ENCODE measurements at regions of chr9 and their contacts with region 1.

Region 1: GRCh38 chr9:34252670-34253459 is 74.0 kb downstream of the UBAP1 start:
- DNase-seq: peak; percentile 31 to 89
- H3K4me3 ChIP-seq: no peak overlapping the region
- H3K27ac ChIP-seq: no peak overlapping the region
- H3K4me1 ChIP-seq: no peaks in the 10 kb centered on the region
- H3K27me3 ChIP-seq: no peaks in the 10 kb centered on the region
- CTCF ChIP-seq: peak; percentile 80 to 95 (median 93)
- EP300 ChIP-seq: no peak
- POLR2A ChIP-seq: no peak; a peak in 1 of 3 replicates
- RAD21 ChIP-seq: peak; percentile 68 to 75

Region 2: DNA sequence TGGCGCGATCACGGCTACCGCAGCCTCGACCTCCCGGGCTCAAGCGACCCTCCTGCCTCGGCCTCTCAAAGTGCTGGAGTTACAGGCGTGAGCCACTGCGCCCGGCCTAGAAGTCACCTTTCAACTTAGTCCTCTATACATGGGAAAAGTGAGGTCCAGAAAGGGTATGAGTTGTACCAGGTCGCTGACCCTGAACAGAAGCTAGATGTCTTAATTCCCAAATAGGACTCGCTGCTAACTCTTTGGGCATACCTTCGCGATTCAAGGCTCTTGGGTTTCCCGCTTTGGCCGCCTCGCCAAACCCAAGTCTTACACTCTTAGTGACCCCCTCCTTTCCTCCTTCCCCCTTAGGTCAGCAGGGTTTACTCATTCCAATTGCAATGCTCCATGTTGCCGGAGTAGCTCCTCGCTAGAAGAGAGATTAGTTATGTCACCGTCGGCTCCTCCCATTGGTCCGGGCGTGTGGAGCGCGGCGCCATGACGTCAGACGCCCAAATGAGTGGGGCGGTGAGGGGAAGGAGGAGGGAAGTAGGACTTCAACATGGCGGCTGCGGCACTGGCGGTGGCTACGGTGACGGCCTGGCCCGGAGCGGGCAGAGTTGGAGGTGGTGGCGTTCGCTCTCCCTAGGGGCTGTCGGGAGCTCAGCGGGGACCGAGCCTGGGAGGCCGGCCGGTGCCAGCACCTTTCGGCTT is 74.2 kb before region 1 on chr9 and contains the start of gene UBAP1:
- CTCF ChIA-PET with region 1: interaction called, 16 read pairs
- POLR2A ChIA-PET with region 1: interaction called, 5 read pairs
- DNase-seq: peak; percentile 90 to 95
- H3K4me3 ChIP-seq: peak within 1 kb of the TSS; percentile 81 to 99 (median 90)
- H3K27ac ChIP-seq: peak within 1 kb of the TSS; percentile 96
- H3K4me1 ChIP-seq: no peaks in the 10 kb centered on the region; a peak in 1 of 7 replicates
- H3K27me3 ChIP-seq: no peaks in the 10 kb centered on the region
- CTCF ChIP-seq: no peak
- EP300 ChIP-seq: no peak
- POLR2A ChIP-seq: peak in 1 of 2 experiments; percentile 90; a peak in 2 of 3 replicates
- RAD21 ChIP-seq: no peak
- total RNA-seq, gene UBAP1: 31.3 and 32.4 TPM in 2 replicates

Region 3: DNA sequence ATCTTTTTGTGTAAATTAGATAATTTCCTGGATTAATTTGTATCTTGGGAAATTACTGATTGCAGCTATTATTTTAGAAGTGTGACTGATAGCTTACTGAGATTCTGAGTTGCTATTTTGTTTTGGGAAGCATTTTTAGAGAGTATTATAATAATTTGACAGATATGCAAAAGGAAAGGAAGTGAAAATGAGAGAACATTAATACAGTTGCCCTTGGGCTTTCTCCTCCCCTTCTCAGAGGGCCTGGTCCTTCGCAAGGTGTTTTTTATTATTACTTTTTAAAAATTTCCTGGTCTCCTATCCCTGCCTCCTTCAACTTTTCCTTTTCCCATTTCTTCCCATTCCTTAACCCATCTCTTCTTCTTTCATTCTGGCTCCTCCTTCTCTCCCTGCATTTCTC is 41.5 kb before region 1 on chr9:
- CTCF ChIA-PET with region 1: no interaction called
- POLR2A ChIA-PET with region 1: no interaction called
- DNase-seq: no peak
- H3K4me3 ChIP-seq: no peak overlapping the region
- H3K27ac ChIP-seq: no peak overlapping the region
- H3K4me1 ChIP-seq: no peaks in the 10 kb centered on the region
- H3K27me3 ChIP-seq: no peaks in the 10 kb centered on the region
- CTCF ChIP-seq: no peak
- EP300 ChIP-seq: no peak
- POLR2A ChIP-seq: no peak
- RAD21 ChIP-seq: no peak

Region 4: GRCh38 chr9:34242830-34243229 is 10.0 kb before region 1 on chr9:
- CTCF ChIA-PET with region 1: interaction called, 52 read pairs
- POLR2A ChIA-PET with region 1: interaction called, 3 read pairs
- DNase-seq: no peak
- H3K4me3 ChIP-seq: no peak overlapping the region
- H3K27ac ChIP-seq: no peak overlapping the region
- H3K4me1 ChIP-seq: peaks cover 0 to 2% (median 0%) of the 10 kb centered on the region in 4 experiments; a peak in 1 of 7 replicates
- H3K27me3 ChIP-seq: no peaks in the 10 kb centered on the region
- CTCF ChIP-seq: no peak
- EP300 ChIP-seq: no peak
- POLR2A ChIP-seq: no peak
- RAD21 ChIP-seq: no peak

Region 5: GRCh38 chr9:34291023-34291422 is 38.2 kb after region 1 on chr9:
- CTCF ChIA-PET with region 1: interaction called, 11 read pairs
- POLR2A ChIA-PET with region 1: no interaction called
- DNase-seq: no peak
- H3K4me3 ChIP-seq: no peak overlapping the region
- H3K27ac ChIP-seq: no peak overlapping the region
- H3K4me1 ChIP-seq: no peaks in the 10 kb centered on the region
- H3K27me3 ChIP-seq: no peaks in the 10 kb centered on the region
- CTCF ChIP-seq: no peak
- EP300 ChIP-seq: no peak
- POLR2A ChIP-seq: no peak
- RAD21 ChIP-seq: no peak

Region 6: GRCh38 chr9:34337404-34337803 is 84.5 kb after region 1 on chr9:
- CTCF ChIA-PET with region 1: interaction called, 18 read pairs
- POLR2A ChIA-PET with region 1: no interaction called
- DNase-seq: no peak
- H3K4me3 ChIP-seq: no peak overlapping the region
- H3K27ac ChIP-seq: no peak overlapping the region
- H3K4me1 ChIP-seq: peaks cover 2 to 9% (median 8%) of the 10 kb centered on the region in 4 experiments; a peak in 5 of 7 replicates
- H3K27me3 ChIP-seq: no peaks in the 10 kb centered on the region
- CTCF ChIP-seq: peak in 2 of 3 experiments; percentile 30 to 32; a peak in 2 of 4 replicates
- EP300 ChIP-seq: no peak
- POLR2A ChIP-seq: no peak
- RAD21 ChIP-seq: peak; percentile 41 to 55

Measured in H1 (cell line).